ENCODE measurements at regions of chr1 and their contacts with region 1.

Region 1: DNA sequence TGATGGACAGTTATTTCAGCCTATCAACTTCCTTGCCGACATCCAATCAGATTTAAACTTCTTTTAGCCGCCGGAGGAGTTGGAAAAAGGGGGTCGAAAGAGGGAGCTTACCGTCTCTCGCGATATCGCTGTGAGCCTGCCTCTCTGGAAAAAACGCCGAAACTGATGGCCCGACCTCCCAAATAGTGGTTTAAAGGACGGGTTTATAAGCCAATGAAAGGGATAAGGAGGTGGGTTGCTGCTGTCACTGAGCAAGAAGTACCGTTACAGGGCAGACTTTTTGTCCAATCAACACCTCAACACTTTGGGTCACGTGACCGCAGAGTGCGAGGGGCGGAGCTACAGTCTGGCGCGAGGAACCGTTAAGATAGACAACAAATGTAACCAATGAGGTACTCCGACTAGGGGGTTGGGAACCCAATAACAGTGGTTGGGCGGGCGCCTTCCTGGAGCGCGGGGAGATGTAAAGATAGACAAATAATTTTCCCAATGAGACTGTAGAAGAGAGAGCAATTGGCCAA is at the start of gene RBM15:
- DNase-seq: peak; percentile 100
- ATAC-seq: peak; percentile 81
- H3K4me3 ChIP-seq: peak within 1 kb of the TSS; percentile 69 to 89
- H3K27ac ChIP-seq: peak within 1 kb of the TSS; percentile 95
- H3K4me1 ChIP-seq: peaks cover 35 to 49% of the 10 kb centered on the region in 2 experiments
- H3K27me3 ChIP-seq: no peaks in the 10 kb centered on the region
- CTCF ChIP-seq: no peak
- POLR2A ChIP-seq: no peak
- RAD21 ChIP-seq: no peak
- total RNA-seq, gene RBM15: 44.0 TPM

Region 2: DNA sequence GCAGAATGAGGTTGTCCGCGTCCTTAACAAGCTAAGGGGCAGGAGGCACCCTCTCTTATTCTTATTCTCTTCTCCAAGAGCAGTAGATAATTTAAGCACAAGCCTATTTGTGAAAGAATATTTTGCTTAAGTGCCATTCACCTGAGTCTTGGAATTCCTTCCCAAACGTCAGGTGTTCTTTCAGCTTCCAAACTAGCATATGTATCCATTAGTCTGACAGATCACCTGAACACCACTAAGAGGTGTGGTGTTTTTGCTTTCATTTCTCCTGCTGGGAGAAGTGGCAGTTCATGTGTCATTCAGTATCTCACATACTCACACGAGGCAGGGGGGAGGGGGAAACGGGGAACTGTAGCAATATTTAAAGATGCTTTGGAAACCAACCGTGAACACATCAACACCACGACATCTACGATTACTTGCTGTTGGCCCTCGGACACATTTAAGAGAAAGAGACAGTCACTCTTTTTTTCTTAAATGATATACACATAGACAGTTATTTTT is 45.3 kb before region 1 on chr1:
- CTCF ChIA-PET with region 1: no interaction called
- POLR2A ChIA-PET with region 1: no interaction called
- RAD21 ChIA-PET with region 1: no interaction called
- intact Hi-C with region 1: no loop called
- DNase-seq: no peak
- ATAC-seq: no peak
- H3K4me3 ChIP-seq: no peak overlapping the region
- H3K27ac ChIP-seq: no peak overlapping the region
- H3K4me1 ChIP-seq: peaks cover 8 to 11% of the 10 kb centered on the region in 2 experiments
- H3K27me3 ChIP-seq: peaks cover 4% of the 10 kb centered on the region; the same call in 1 of the 2 replicates
- CTCF ChIP-seq: no peak
- POLR2A ChIP-seq: no peak
- RAD21 ChIP-seq: no peak

Region 3: GRCh38 chr1:110312188-110313121 is 26.5 kb before region 1 on chr1:
- CTCF ChIA-PET with region 1: interaction called, 12 read pairs
- POLR2A ChIA-PET with region 1: no interaction called
- RAD21 ChIA-PET with region 1: interaction called in 1 of 2 experiments, 4 read pairs
- intact Hi-C with region 1: no loop called
- DNase-seq: peak; percentile 54
- ATAC-seq: peak; percentile 99
- H3K4me3 ChIP-seq: no peak overlapping the region
- H3K27ac ChIP-seq: no peak overlapping the region
- H3K4me1 ChIP-seq: peaks cover 2 to 20% of the 10 kb centered on the region in 2 experiments; a peak in 2 of 4 replicates
- H3K27me3 ChIP-seq: no peaks in the 10 kb centered on the region
- CTCF ChIP-seq: peak; percentile 93 to 97 (median 93)
- POLR2A ChIP-seq: no peak
- RAD21 ChIP-seq: peak; percentile 99

Region 4: DNA sequence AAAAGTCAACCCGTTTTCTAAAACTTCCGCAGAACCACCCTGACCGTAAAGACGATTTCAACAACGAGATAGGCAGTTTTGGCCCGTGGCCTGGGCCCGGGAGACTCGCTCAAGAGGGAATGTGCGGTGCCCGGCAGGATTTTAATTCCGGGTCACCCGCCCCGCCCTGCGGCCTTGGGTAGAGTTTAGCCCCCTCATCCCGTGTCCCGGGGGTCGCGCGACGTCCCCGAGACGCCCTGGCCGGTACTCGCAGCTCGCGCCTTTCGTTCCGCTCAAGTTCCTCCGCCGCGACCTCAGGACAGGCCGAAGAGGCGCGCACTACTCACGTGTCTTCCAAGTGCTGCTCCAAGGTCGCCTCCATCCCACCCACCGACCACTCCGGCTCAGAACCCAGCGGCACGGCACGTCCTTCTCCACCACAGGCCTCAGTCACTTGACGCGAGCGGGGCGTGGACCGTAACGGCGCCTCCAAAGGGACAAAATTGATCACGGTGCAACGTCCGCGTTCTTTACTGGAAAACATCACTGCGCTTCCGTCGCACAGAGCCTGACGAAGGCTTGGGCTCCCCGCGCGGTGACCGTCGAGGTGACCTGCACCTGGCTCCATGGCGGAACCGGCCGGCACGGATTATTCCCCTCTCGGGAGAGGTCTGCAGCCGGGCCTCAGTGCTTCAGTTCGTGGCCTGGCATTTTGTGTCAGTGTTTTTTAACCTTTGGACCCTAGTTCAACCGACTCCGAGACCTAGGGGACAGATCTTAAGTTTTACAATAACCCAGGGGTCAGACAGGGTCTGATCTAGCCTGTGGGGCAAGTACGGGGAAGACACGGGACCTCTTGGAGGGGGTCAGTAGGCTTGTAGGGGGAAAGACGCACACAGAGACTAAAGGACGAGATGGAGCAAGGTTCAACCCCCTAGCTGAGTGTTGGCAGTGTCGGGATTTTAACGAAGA is 68.6 kb after region 1 on chr1 and contains the start of gene LAMTOR5:
- CTCF ChIA-PET with region 1: interaction called, 3 read pairs
- POLR2A ChIA-PET with region 1: interaction called, 7 read pairs
- RAD21 ChIA-PET with region 1: no interaction called
- intact Hi-C with region 1: loop called (anchors 1 kb)
- DNase-seq: peak; percentile 93
- ATAC-seq: peak; percentile 89
- H3K4me3 ChIP-seq: peak within 1 kb of the TSS; percentile 96 to 98
- H3K27ac ChIP-seq: peak within 1 kb of the TSS; percentile 80
- H3K4me1 ChIP-seq: peaks cover 4 to 14% of the 10 kb centered on the region in 2 experiments; a peak in 3 of 4 replicates
- H3K27me3 ChIP-seq: no peaks in the 10 kb centered on the region
- CTCF ChIP-seq: no peak
- POLR2A ChIP-seq: peak; percentile 63
- RAD21 ChIP-seq: no peak
- total RNA-seq, gene LAMTOR5: 137 TPM